ENCODE measurements at regions of chr1 and their contacts with region 1.

Region 1: DNA sequence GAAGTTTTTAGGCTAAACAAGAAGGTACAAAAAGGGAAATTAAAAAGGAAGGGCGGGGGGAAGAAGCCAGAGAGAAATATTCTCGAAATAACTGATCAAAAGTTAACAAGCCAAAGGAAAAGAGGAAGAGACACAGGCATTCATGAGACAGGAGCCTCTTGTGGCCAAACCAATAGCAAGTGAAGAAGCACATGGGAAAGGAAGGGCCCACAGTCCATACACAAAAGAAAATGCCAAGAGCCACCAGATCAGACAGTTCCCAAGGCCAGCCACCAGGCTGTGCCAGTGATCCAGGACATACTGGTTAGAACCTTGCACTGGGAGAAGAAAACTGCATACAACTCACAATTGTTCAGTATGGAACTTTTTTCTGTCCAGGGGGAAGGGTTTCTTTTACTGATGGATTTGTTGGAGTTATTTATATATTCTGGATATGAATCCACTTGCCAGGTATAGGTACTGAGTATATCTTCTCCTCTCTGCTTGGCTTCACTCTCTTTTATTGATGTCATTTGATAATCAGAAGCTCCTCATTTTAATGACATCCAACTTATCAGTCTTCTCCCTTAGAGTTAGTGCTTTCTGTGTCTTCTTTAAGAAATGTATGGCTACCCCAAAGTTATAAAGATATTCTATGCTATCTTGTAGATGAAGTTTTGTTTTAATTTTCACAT is 76.8 kb downstream of the CD46 start:
- DNase-seq: peak in 8 of 9 experiments; percentile 35 to 83 (median 64)
- ATAC-seq: peak; percentile 19
- H3K4me3 ChIP-seq: no peak overlapping the region
- H3K4me3 Mint-ChIP-seq: no peak overlapping the region
- H3K27ac ChIP-seq: peak overlapping the region in 1 of 2 experiments; percentile 29
- H3K27ac Mint-ChIP-seq: peak overlapping the region; percentile 47
- H3K4me1 ChIP-seq: peaks cover 76% of the 10 kb centered on the region
- H3K4me1 Mint-ChIP-seq: peaks cover 94% of the 10 kb centered on the region
- H3K27me3 ChIP-seq: no peaks in the 10 kb centered on the region
- H3K27me3 Mint-ChIP-seq: no peaks in the 10 kb centered on the region
- CTCF ChIP-seq: peak; percentile 78

Region 2: DNA sequence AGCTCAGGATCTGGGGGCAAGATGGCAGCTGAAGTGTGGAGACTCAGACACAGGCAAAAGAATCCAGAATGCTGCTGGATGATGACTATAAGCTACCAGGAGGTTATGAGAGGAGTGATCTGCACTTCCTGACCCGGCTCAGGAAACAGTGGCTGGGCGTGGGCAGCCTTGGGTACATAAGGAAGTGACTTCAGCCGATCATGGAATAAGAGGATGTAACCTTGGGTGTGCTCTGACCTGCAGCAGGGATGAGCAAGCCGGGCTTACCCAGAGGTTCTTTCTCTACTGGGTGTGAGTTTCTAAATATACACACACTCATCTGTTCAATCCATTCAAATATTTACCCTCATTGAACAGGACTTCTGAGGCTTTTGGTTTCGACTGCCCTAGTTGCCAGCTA is 19.6 kb after region 1 on chr1:
- CTCF ChIA-PET with region 1: interaction called, 8 read pairs
- POLR2A ChIA-PET with region 1: interaction called, 4 read pairs
- intact Hi-C with region 1: loop called in 1 of 2 experiments (anchors 2 kb)
- DNase-seq: peak in 2 of 9 experiments; percentile 48 to 50
- ATAC-seq: peak; percentile 39
- H3K4me3 ChIP-seq: no peak overlapping the region
- H3K4me3 Mint-ChIP-seq: peak overlapping the region; percentile 50
- H3K27ac ChIP-seq: no peak overlapping the region
- H3K27ac Mint-ChIP-seq: peak overlapping the region; percentile 60
- H3K4me1 ChIP-seq: peaks cover 69% of the 10 kb centered on the region
- H3K4me1 Mint-ChIP-seq: peaks cover 91% of the 10 kb centered on the region
- H3K27me3 ChIP-seq: no peaks in the 10 kb centered on the region
- H3K27me3 Mint-ChIP-seq: no peaks in the 10 kb centered on the region
- CTCF ChIP-seq: no peak

Region 3: GRCh38 chr1:207868774-207869721 is 40.4 kb after region 1 on chr1:
- CTCF ChIA-PET with region 1: interaction called, 321 read pairs
- POLR2A ChIA-PET with region 1: interaction called, 62 read pairs
- intact Hi-C with region 1: loop called (anchors 1 kb)
- DNase-seq: peak; percentile 56 to 90 (median 68)
- ATAC-seq: peak; percentile 68
- H3K4me3 ChIP-seq: peak overlapping the region; percentile 66 to 87
- H3K4me3 Mint-ChIP-seq: peak overlapping the region; percentile 94
- H3K27ac ChIP-seq: peak overlapping the region; percentile 72 to 84
- H3K27ac Mint-ChIP-seq: peak overlapping the region; percentile 96
- H3K4me1 ChIP-seq: peaks cover 80% of the 10 kb centered on the region
- H3K4me1 Mint-ChIP-seq: peaks cover 90% of the 10 kb centered on the region
- H3K27me3 ChIP-seq: no peaks in the 10 kb centered on the region
- H3K27me3 Mint-ChIP-seq: no peaks in the 10 kb centered on the region
- CTCF ChIP-seq: peak; percentile 83

Region 4: DNA sequence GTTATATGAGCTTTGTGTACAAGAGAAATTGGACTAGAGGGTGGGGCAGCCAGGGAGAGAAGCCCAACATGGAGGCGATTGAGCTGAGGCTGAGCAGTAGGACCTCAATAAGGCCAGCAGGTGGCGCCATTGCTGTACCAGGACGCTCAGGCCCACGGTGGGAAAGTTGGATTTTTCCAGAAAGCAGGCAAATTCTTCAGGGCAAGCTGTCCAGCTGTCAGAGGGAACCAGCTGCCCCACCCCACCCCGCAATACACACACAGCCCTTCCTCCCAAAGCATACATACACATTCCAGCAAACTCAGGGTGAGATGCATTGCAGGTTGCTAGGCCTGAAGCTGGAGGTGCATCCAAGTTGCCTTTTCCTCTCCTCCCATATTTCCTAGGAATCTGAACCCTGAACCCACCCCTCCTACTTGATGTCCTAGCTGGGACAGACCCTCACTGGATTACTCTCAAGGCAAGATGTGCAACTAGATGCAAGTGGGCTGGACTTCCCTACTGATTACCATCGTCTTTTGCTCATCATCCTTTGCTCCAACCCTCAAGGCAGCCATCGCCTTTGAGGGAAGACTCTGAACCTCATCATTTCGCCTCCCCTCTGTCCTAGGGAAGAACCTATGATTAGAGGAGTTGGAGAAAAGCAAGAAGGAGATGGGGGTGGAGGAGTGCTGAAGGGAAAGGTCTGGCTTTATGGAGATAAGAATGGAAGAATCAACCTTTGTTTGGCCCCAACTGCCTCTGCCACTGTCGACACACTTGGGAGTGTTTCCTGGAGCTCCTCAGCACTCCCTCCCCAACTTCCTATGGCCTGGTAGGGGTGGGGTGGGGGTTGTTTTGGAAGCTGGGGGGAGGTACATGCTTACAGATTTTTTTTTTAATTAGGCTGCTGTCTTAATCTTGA is 56.8 kb after region 1 on chr1:
- CTCF ChIA-PET with region 1: interaction called, 47 read pairs
- POLR2A ChIA-PET with region 1: interaction called, 8 read pairs
- intact Hi-C with region 1: no loop called
- DNase-seq: peak; percentile 43 to 87 (median 68)
- ATAC-seq: peak; percentile 74
- H3K4me3 ChIP-seq: no peak overlapping the region
- H3K4me3 Mint-ChIP-seq: peak overlapping the region; percentile 20
- H3K27ac ChIP-seq: no peak overlapping the region
- H3K27ac Mint-ChIP-seq: peak overlapping the region; percentile 96
- H3K4me1 ChIP-seq: peaks cover 26% of the 10 kb centered on the region
- H3K4me1 Mint-ChIP-seq: peaks cover 37% of the 10 kb centered on the region
- H3K27me3 ChIP-seq: no peaks in the 10 kb centered on the region
- H3K27me3 Mint-ChIP-seq: peaks cover 3% of the 10 kb centered on the region
- CTCF ChIP-seq: peak; percentile 86

Region 5: DNA sequence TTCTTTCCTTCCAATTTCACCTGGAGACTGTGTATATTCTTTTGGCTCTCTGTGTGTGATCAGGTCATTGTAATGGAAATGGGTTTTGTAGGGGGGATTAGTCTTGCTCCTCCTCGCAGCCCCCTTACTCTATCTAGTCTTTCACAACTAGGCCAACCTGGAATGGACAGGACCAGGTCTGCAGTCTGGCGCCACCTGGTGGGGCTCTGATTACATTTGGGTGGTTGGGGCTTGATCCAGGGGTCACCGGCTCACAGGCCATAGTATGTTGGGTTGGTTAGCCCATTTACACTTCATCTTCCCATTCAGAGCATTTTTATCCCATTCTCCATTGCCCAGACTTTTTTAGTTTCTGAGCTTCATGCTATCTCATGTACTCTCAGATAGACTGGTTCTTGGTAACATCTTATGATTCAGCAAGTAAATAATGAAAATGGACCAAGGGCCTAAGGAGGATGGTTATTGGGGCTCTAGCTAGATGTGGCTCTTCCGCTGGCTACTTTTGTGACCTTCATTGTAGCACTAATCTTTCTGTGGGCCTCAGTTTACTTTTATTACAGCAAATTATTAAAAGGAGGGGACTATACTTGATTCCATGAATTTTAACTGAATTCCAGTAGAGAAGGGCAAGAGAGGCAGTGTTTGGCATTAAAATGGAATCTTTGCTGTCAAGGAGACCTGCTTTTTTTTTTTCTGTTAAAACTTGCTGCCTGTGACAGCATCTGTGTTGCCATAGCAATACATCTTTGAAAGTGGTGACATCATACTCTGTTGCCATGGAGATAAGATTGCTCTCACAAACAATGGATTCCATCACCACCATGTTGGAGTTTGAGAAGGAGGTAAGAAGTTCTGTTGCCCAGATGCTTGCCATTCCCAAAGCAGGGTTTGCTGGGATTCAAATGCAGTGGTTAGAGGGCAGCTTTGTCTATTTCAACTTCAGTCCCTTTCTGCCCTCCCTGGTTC is 265.4 kb after region 1 on chr1:
- CTCF ChIA-PET with region 1: no interaction called
- POLR2A ChIA-PET with region 1: no interaction called
- intact Hi-C with region 1: no loop called
- DNase-seq: peak; percentile 21 to 68 (median 58)
- ATAC-seq: peak; percentile 23
- H3K4me3 ChIP-seq: no peak overlapping the region
- H3K4me3 Mint-ChIP-seq: no peak overlapping the region
- H3K27ac ChIP-seq: no peak overlapping the region
- H3K27ac Mint-ChIP-seq: no peak overlapping the region
- H3K4me1 ChIP-seq: no peaks in the 10 kb centered on the region
- H3K4me1 Mint-ChIP-seq: no peaks in the 10 kb centered on the region
- H3K27me3 ChIP-seq: no peaks in the 10 kb centered on the region
- H3K27me3 Mint-ChIP-seq: no peaks in the 10 kb centered on the region
- CTCF ChIP-seq: peak; percentile 64